Endothelial cell of umbilical vein (primary cell): ENCODE measurements at regions of chr9 and their contacts with region 1.

Region 1: GRCh38 chr9:132768932-132769905 is 99.0 kb downstream of the GTF3C4 start:
- DNase-seq: peak; percentile 68
- H3K4me3 ChIP-seq: peak overlapping the region; percentile 83 to 95 (median 91)
- H3K27ac ChIP-seq: peak overlapping the region; percentile 61
- H3K4me1 ChIP-seq: peaks cover 3% of the 10 kb centered on the region
- H3K27me3 ChIP-seq: peaks cover 0 to 11% of the 10 kb centered on the region in 2 experiments
- CTCF ChIP-seq: peak; percentile 31 to 55
- POLR2A ChIP-seq: no peak

Region 2: DNA sequence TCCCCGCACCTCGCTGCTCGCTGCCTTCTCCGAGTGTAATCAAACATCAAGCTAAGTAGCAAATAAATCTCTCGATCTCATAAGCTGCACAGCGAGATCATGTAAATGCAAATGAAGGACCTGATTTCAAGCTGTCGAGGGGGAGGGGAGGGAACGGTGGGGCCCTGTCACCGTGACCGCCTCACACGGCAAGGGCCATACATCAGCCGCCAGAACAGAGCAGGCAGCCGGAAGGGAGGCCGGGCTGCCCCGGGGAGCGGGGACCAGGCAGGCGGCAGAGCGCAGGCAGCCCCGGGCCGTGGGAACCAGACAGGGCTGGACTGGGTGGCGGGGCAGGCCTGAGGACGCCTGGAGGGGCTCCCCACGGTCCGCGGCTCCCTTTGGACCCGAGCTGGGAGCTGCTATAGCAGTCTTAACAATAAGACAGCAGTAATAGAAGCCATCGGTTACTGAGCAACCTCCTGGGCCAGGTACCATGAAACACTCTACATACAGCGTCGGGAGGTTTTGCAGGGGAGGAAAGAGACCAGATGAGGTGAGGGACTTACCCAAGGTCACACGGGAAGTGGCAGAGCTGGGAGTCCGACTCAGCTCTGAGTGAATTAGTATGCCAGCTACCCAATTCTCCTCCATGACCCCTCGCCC is 282.4 kb before region 1 on chr9:
- CTCF ChIA-PET with region 1: no interaction called
- POLR2A ChIA-PET with region 1: no interaction called
- dilution Hi-C with region 1: no loop called
- intact Hi-C with region 1: no loop called
- DNase-seq: no peak
- H3K4me3 ChIP-seq: no peak overlapping the region
- H3K27ac ChIP-seq: no peak overlapping the region
- H3K4me1 ChIP-seq: no peaks in the 10 kb centered on the region
- H3K27me3 ChIP-seq: peaks cover 15 to 27% of the 10 kb centered on the region in 2 experiments
- CTCF ChIP-seq: no peak
- POLR2A ChIP-seq: no peak

Region 3: DNA sequence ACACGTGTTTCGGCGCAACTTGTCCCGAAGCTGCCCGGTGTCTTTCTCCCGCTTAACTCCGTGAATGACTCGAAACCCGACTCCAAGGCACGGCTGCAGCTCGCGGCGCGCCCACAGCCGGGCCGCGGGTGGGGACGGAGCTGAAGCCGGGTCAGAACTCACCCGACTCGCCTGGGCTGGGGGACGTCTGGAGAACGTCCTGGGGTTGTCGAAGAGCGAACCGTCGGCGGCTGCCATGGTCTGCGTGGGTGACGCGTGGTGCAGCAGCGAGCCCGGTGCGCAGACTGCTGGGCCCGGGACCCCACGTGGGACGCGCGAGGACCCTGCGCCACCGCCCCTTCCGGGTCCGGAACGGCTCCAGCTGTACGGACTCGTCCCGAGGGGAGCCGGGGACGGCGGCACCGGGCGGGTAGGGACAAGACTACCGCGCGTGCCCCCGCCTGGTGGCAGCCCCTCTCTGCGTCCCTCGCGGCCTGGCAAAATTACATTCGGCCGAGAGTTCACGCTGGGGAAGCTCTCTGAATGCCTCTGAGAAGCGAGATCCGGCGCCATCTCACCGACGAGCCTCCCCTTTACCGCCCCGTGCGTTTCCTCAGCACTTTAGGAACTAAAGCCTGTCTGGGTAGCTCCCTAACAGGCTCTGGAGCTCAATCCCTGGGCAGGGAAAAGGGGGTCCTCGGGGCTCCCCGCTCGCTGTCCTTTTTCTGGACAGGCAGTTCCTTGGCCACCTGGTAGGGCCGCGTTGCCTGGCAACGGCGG is 99.3 kb before region 1 on chr9 and contains the start of gene DDX31:
- CTCF ChIA-PET with region 1: interaction called, 15 read pairs
- POLR2A ChIA-PET with region 1: no interaction called
- dilution Hi-C with region 1: no loop called
- intact Hi-C with region 1: loop called (anchors 10 kb)
- DNase-seq: peak; percentile 78
- H3K4me3 ChIP-seq: peak within 1 kb of the TSS; percentile 74 to 92 (median 78)
- H3K27ac ChIP-seq: peak within 1 kb of the TSS; percentile 90
- H3K4me1 ChIP-seq: peaks cover 21% of the 10 kb centered on the region
- H3K27me3 ChIP-seq: no peaks in the 10 kb centered on the region
- CTCF ChIP-seq: peak in 1 of 2 donors; percentile 3
- POLR2A ChIP-seq: peak; percentile 81
- total RNA-seq, gene DDX31: 16.3 and 16.4 TPM in 2 replicates

Region 4: DNA sequence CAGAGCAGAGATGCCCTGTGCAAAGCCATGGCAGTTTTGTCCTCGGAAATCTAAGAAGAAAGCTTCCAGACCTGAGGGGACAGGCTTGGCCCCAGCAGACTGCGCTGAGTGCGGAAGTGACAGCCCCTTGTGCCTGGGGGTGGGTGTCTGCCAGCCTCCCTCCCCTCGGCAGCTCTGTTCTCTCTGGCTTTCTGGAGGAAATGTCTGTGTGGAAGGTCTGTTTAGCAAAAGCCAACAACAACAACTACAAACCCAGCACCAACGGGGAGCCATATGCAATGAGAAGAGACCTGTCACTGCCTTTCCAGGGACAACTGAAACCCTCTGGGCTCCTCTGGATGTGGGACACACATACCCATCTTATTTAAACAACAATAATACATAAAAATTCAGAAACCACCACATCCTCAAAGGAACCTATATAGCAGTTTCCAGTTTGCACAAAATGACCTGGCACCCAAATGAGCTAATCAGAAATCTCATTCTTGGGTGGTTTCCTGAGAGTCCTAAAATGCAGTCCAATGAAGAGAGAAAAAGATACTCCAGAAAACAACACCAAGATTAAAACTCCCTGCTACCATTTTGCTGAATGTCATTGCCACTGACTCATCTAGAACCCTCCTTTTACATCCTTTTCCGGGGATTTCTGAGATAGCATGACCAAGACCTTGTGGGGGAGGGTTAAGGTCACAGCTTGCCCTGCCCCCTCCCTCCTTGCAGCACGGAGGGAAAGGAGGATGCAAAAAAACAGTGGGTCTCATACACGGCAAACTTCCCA is 11.2 kb after region 1 on chr9:
- CTCF ChIA-PET with region 1: interaction called, 14 read pairs
- POLR2A ChIA-PET with region 1: no interaction called
- dilution Hi-C with region 1: no loop called
- intact Hi-C with region 1: no loop called
- DNase-seq: no peak
- H3K4me3 ChIP-seq: no peak overlapping the region
- H3K27ac ChIP-seq: no peak overlapping the region
- H3K4me1 ChIP-seq: no peaks in the 10 kb centered on the region
- H3K27me3 ChIP-seq: peaks cover 9 to 17% of the 10 kb centered on the region in 2 experiments
- CTCF ChIP-seq: no peak
- POLR2A ChIP-seq: no peak